ENCODE measurements at regions of chr5 and their contacts with region 1.

Region 1: DNA sequence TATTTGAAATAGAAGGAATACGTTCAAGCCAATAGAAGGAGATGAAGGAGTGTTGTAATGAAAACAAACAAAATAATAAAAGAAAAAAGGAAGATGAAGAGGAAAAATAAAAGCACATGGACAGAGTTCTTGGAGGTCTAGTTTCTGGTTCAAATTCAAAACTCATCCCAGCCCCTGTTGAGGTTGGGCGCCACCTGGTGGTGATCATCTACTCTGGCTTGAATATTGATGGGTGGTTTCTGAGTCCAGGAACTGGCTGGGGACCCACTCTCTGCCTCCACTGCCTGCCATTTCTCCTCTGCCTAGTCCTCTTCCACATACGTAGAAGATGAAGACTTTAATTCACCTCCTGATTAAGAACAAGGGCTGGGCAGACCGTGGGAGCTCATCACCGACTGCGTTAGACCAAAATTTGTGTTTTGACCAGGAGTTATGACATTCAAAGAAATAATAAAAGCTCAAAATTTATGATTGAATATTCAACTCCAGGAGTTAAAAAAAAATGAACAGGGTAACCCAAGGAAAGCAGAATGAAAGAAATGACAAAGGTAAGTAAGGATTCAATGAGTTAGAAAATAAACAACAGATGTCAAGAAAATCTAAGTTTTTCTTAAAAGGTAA is 99.0 kb upstream of the SLC1A3 start:
- DNase-seq: peak; percentile 61 to 78
- ATAC-seq: peak; percentile 49 to 78 (median 77)
- H3K4me3 ChIP-seq: no peak overlapping the region
- H3K4me3 Mint-ChIP-seq: no peak overlapping the region
- H3K27ac ChIP-seq: no peak overlapping the region
- H3K27ac Mint-ChIP-seq: no peak overlapping the region
- H3K4me1 ChIP-seq: no peaks in the 10 kb centered on the region
- H3K4me1 Mint-ChIP-seq: no peaks in the 10 kb centered on the region
- H3K27me3 ChIP-seq: no peaks in the 10 kb centered on the region
- H3K27me3 Mint-ChIP-seq: peaks cover 0 to 6% of the 10 kb centered on the region in 2 donors
- CTCF ChIP-seq: peak; percentile 86

Region 2: DNA sequence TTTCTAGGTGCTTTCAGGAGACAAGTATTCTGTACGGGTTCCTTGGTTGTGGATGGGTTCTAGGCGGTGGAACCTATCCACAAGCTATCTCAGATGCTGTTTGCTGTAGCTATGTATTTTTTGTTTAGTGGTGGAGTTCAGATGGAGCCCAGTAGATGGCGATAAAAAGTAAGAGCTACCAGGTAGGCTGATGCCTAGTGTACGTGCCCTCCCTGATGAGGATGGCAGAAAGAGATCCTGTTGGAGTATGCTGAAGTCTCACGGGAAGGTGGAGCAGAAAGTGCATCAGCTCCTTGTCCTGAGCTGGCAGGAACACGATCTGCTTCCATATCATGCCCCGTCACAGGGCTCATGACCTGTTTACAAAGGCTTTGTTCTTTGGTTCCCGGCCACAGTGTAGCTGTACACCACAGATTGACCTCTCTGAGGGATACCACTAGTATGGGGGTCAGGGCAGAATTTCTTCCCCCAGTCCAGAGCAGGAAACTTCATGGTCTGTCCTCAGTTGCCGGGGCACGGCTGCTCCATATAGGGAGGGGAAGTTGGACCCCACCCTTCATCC is 428.2 kb before region 1 on chr5:
- intact Hi-C with region 1: loop called (anchors 1 kb)
- DNase-seq: peak in 1 of 2 donors; percentile 61
- ATAC-seq: peak; percentile 75 to 84 (median 79)
- H3K4me3 ChIP-seq: no peak overlapping the region
- H3K4me3 Mint-ChIP-seq: no peak overlapping the region
- H3K27ac ChIP-seq: no peak overlapping the region
- H3K27ac Mint-ChIP-seq: no peak overlapping the region
- H3K4me1 ChIP-seq: no peaks in the 10 kb centered on the region
- H3K4me1 Mint-ChIP-seq: no peaks in the 10 kb centered on the region
- H3K27me3 ChIP-seq: peaks cover 4% of the 10 kb centered on the region
- H3K27me3 Mint-ChIP-seq: peaks cover 13 to 25% of the 10 kb centered on the region in 2 donors
- CTCF ChIP-seq: peak; percentile 54

Region 3: DNA sequence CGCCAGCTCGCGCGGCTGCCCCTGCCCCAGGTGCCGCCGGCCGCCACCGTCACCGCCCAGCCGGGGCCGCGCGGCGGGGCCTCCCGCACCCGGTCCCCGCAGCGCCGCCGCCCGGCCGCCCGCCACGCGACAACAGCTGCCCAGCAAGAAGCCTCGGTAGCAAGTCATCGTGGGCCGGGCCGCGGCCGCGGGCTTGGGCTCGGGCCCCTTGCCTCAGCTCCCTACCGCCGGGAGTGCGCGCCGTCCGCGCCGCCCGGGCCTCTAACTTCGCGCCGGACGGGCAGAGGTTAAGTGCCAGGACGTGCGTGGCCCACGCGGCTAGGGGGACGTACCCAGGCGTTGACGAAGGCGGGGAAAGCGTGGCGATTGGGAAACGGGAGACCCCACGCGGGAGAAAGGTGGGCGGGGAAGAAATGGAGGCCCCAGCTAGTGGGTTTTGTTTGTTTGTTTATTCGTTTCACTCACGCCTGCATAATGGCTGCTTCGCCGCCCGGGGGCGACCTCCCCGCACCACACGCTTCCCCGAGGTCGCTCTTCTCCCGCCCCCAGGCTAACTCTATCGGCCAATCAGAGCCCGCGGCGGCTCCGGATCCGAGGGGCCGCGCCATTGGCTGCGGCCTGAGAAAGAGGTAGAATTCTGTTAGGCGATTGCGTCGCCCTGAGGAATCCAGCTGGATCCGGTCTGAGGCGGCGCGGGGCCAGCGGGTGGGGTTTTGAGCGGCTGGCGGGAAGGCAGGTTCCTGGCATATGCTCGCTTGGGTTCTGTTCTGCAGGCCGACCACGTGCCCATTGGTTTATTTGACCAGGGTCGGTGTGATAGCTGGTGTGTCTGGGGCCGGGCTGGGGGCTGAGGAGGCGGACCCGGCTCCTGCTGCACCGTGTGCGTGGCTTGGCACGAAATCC is 265.6 kb before region 1 on chr5 and contains the start of gene NADK2:
- intact Hi-C with region 1: loop called (anchors 1 kb)
- DNase-seq: peak; percentile 93 to 96
- ATAC-seq: peak; percentile 86 to 93 (median 86)
- H3K4me3 ChIP-seq: peak within 1 kb of the TSS; percentile 91
- H3K4me3 Mint-ChIP-seq: peak within 1 kb of the TSS; percentile 93
- H3K27ac ChIP-seq: peak within 1 kb of the TSS; percentile 95
- H3K27ac Mint-ChIP-seq: peak within 1 kb of the TSS; percentile 54 to 92
- H3K4me1 ChIP-seq: peaks cover 15% of the 10 kb centered on the region
- H3K4me1 Mint-ChIP-seq: peaks cover 25 to 42% of the 10 kb centered on the region in 2 donors
- H3K27me3 ChIP-seq: no peaks in the 10 kb centered on the region
- H3K27me3 Mint-ChIP-seq: no peaks in the 10 kb centered on the region
- CTCF ChIP-seq: peak; percentile 66
- total RNA-seq, gene NADK2: 13.1 to 16.2 (median 14.3) TPM

Region 4: DNA sequence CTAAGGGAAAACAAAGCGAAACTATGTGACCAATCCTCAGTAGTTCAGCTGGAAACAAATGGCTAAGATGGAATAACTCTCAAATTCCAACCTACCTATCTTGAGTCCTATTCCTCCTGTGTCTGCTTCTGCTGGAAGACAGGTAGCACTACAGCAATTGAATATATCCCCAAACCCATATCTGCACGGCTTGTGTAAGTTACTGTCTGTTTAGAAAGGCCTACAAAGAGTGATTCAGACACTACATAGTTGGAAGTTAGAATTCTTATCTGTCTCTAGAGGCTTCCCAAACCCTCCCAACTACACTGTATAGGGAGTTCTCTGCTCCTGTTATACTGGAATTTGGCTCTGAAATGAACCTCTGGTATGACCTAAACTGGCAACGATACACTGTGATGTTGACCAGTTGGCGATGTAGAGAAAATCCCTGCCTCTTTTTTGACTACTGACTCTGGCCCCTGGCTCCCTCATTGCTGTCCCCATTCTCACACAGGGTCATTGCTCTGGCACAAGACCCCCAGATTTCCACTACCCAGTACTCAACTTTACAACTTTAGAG is 243.2 kb before region 1 on chr5:
- intact Hi-C with region 1: loop called (anchors 2 kb)
- DNase-seq: no peak
- ATAC-seq: no peak
- H3K4me3 ChIP-seq: no peak overlapping the region
- H3K4me3 Mint-ChIP-seq: no peak overlapping the region
- H3K27ac ChIP-seq: no peak overlapping the region
- H3K27ac Mint-ChIP-seq: no peak overlapping the region
- H3K4me1 ChIP-seq: no peaks in the 10 kb centered on the region
- H3K4me1 Mint-ChIP-seq: no peaks in the 10 kb centered on the region
- H3K27me3 ChIP-seq: no peaks in the 10 kb centered on the region
- H3K27me3 Mint-ChIP-seq: peaks cover 9 to 16% of the 10 kb centered on the region in 2 donors
- CTCF ChIP-seq: no peak

Region 5: GRCh38 chr5:36285837-36286615 is 221.4 kb before region 1 on chr5:
- intact Hi-C with region 1: no loop called
- DNase-seq: no peak
- ATAC-seq: no peak
- H3K4me3 ChIP-seq: no peak overlapping the region
- H3K4me3 Mint-ChIP-seq: no peak overlapping the region
- H3K27ac ChIP-seq: no peak overlapping the region
- H3K27ac Mint-ChIP-seq: no peak overlapping the region
- H3K4me1 ChIP-seq: no peaks in the 10 kb centered on the region
- H3K4me1 Mint-ChIP-seq: no peaks in the 10 kb centered on the region
- H3K27me3 ChIP-seq: no peaks in the 10 kb centered on the region
- H3K27me3 Mint-ChIP-seq: peaks cover 8% of the 10 kb centered on the region in 2 donors
- CTCF ChIP-seq: no peak

Region 6: DNA sequence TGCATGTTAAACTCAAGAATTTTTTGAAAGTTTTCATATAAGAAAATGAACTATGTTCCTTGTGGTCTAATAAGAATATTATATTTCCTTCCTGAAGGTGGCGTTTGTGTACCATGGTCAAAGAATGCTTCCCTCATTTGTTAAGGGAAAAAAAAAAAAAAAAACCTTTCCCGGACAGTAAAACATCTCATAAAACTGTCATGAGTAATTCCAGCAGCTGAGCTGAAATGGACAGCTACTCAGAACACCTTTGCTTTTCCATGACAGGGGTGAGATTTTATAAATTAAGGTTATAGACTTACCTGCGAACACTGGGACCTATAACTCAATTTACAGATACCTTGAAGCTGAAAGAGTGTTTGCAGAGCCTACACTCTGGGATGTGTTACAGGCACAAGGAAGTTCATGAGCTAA is 92.6 kb before region 1 on chr5:
- intact Hi-C with region 1: loop called (anchors 1 kb)
- DNase-seq: no peak
- ATAC-seq: no peak
- H3K4me3 ChIP-seq: no peak overlapping the region
- H3K4me3 Mint-ChIP-seq: no peak overlapping the region
- H3K27ac ChIP-seq: no peak overlapping the region
- H3K27ac Mint-ChIP-seq: no peak overlapping the region
- H3K4me1 ChIP-seq: no peaks in the 10 kb centered on the region
- H3K4me1 Mint-ChIP-seq: peaks cover 10 to 15% of the 10 kb centered on the region in 2 donors
- H3K27me3 ChIP-seq: no peaks in the 10 kb centered on the region
- H3K27me3 Mint-ChIP-seq: peaks cover 0 to 5% of the 10 kb centered on the region in 2 donors
- CTCF ChIP-seq: peak; percentile 27

Region 7: GRCh38 chr5:37063739-37064138 is 556.3 kb after region 1 on chr5:
- intact Hi-C with region 1: no loop called
- DNase-seq: no peak
- ATAC-seq: no peak
- H3K4me3 ChIP-seq: no peak overlapping the region
- H3K4me3 Mint-ChIP-seq: no peak overlapping the region
- H3K27ac ChIP-seq: no peak overlapping the region
- H3K27ac Mint-ChIP-seq: no peak overlapping the region
- H3K4me1 ChIP-seq: no peaks in the 10 kb centered on the region
- H3K4me1 Mint-ChIP-seq: no peaks in the 10 kb centered on the region
- H3K27me3 ChIP-seq: no peaks in the 10 kb centered on the region
- H3K27me3 Mint-ChIP-seq: no peaks in the 10 kb centered on the region
- CTCF ChIP-seq: no peak

Measured in natural killer cell (primary cell).